Dendritic cell treated with granulocyte-macrophage colony-stimulating factor and Interleukin-4, amounts not matched to agents 40 ng/mL and 50 ng/mL, for 4 days (primary cell): ENCODE measurements at regions of chr12 and their contacts with region 1.

Region 1: DNA sequence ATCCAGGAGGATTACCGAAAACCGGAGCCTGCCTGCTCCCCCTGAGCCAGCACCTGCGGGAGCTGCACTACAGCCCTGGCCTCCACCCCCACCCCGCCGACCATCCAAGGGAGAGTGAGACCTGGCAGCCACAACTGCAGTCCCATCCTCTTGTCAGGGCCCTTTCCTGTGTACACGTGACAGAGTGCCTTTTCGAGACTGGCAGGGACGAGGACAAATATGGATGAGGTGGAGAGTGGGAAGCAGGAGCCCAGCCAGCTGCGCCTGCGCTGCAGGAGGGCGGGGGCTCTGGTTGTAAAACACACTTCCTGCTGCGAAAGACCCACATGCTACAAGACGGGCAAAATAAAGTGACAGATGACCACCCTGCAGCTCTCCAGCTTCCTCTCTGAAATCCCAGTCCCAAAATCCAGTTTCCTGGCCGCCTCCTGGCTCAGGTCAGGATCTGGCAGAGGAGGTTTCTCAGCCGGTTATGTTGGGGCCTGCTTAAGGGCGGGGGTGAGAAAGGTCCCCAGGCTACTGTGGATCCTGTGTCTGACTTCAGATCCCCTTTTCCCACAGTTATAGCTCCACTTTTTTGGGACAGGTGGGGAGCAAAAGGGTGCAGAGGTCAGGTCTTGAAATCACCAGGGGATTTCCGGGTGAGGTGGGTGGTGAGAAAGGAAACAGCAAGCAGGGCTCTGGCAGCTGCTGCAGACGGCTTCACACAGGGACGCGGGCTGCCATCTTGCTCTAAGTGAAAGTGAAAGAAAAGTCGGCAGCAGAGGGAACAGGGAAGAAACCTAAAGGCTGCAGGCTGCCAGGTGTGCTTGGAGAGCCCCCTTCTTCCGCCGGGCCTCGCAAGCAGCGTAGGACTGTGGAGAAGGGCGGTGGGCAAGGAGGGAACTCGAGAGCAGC is at the start of gene TAPBPL:
- H3K4me3 Mint-ChIP-seq: peak within 1 kb of the TSS; percentile 95
- H3K27ac Mint-ChIP-seq: peak within 1 kb of the TSS; percentile 99
- H3K4me1 Mint-ChIP-seq: peaks cover 37% of the 10 kb centered on the region
- H3K27me3 Mint-ChIP-seq: no peaks in the 10 kb centered on the region

Region 2: GRCh38 chr12:6430124-6430989 is 21.2 kb before region 1 on chr12:
- intact Hi-C with region 1: no loop called
- H3K4me3 Mint-ChIP-seq: peak overlapping the region; percentile 61
- H3K27ac Mint-ChIP-seq: peak overlapping the region; percentile 64
- H3K4me1 Mint-ChIP-seq: peaks cover 38% of the 10 kb centered on the region
- H3K27me3 Mint-ChIP-seq: peaks cover 3% of the 10 kb centered on the region

Region 3: GRCh38 chr12:6461401-6462233 is 10.0 kb after region 1 on chr12:
- intact Hi-C with region 1: loop called (anchors 1 kb)
- H3K4me3 Mint-ChIP-seq: peak overlapping the region; percentile 56
- H3K27ac Mint-ChIP-seq: peak overlapping the region; percentile 89
- H3K4me1 Mint-ChIP-seq: peaks cover 80% of the 10 kb centered on the region
- H3K27me3 Mint-ChIP-seq: no peaks in the 10 kb centered on the region